Gastrocnemius medialis (tissue), 4 donors: ENCODE measurements at regions of chr7 and their contacts with region 1.

Region 1: DNA sequence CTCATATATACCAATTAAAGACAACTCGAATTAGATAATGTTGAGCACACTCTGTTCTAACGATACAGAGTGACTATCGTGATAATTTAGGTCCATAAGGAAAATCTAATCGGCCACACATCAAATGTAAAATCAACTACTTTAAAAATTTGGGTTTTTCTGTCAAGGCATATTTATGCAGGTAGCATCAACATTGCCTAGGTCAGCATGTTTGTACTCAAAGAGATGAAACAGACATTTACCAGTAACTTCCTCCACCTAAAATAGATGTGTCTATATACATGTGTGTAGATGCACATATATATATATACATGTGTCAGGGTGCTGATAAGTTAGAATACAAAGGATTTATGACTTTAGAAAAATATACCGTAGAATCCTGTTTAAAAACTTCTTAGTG is 22.0 kb downstream of the PSMC2 start:
- DNase-seq: no peak
- ATAC-seq: no peak
- H3K4me3 ChIP-seq: no peak overlapping the region
- H3K27ac ChIP-seq: no peak overlapping the region
- H3K4me1 ChIP-seq: no peaks in the 10 kb centered on the region
- H3K27me3 ChIP-seq: no peaks in the 10 kb centered on the region
- CTCF ChIP-seq: no peak
- POLR2A ChIP-seq: no peak

Region 2: GRCh38 chr7:102473261-102473991 is 896.0 kb before region 1 on chr7:
- in situ Hi-C with region 1: no loop called
- intact Hi-C with region 1: no loop called
- DNase-seq: peak; percentile 2 to 48
- ATAC-seq: no peak
- H3K4me3 ChIP-seq: no peak overlapping the region
- H3K27ac ChIP-seq: peak overlapping the region in 1 of 4 donors; percentile 10
- H3K4me1 ChIP-seq: peaks cover 0 to 11% of the 10 kb centered on the region in 2 donors
- H3K27me3 ChIP-seq: no peaks in the 10 kb centered on the region
- CTCF ChIP-seq: no peak
- POLR2A ChIP-seq: no peak

Region 3: GRCh38 chr7:103317016-103317415 is 52.4 kb before region 1 on chr7:
- in situ Hi-C with region 1: loop called in 1 of 4 experiments (anchors 5 kb)
- intact Hi-C with region 1: no loop called
- DNase-seq: no peak
- ATAC-seq: no peak
- H3K4me3 ChIP-seq: no peak overlapping the region
- H3K27ac ChIP-seq: no peak overlapping the region
- H3K4me1 ChIP-seq: no peaks in the 10 kb centered on the region
- H3K27me3 ChIP-seq: no peaks in the 10 kb centered on the region
- CTCF ChIP-seq: no peak
- POLR2A ChIP-seq: no peak

Region 4: DNA sequence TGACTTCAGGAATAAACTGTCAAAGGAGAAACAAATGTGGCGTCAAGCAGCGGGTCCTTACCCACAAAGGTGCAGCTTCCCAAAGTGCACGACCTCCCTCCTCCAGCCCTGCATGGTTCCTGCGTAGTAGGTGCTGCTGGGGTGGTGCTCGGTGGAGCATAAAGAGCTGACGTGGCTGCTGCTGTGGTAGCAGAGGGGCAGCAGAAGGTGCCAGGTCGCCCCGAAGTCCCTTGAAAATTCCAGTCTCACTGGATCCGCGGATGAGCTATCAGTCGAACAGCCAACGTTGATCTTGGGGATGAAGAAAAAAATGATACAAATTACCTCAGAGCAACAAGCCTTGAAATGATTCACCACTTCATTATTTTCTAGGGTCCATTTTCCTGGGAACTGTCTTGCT is 181.6 kb after region 1 on chr7:
- in situ Hi-C with region 1: no loop called
- intact Hi-C with region 1: no loop called
- DNase-seq: no peak
- ATAC-seq: no peak
- H3K4me3 ChIP-seq: no peak overlapping the region
- H3K27ac ChIP-seq: no peak overlapping the region
- H3K4me1 ChIP-seq: no peaks in the 10 kb centered on the region
- H3K27me3 ChIP-seq: no peaks in the 10 kb centered on the region
- CTCF ChIP-seq: no peak
- POLR2A ChIP-seq: no peak